Naive thymus-derived CD4-positive, alpha-beta T cell (primary cell): ENCODE measurements at regions of chr10 and their contacts with region 1.

Region 1: GRCh38 chr10:84352251-84352842 is 24.0 kb downstream of the CCSER2 start:
- DNase-seq: peak; percentile 33 to 68 (median 55)
- ATAC-seq: peak; percentile 94
- H3K4me3 ChIP-seq: no peak overlapping the region
- H3K4me3 Mint-ChIP-seq: peak overlapping the region in 3 of 10 donors; percentile 18 to 56 (median 35)
- H3K27ac ChIP-seq: no peak overlapping the region
- H3K27ac Mint-ChIP-seq: no peak overlapping the region
- H3K4me1 ChIP-seq: peaks cover 30 to 46% of the 10 kb centered on the region in 2 donors
- H3K4me1 Mint-ChIP-seq: peaks cover 47 to 87% (median 80%) of the 10 kb centered on the region in 7 donors
- H3K27me3 ChIP-seq: no peaks in the 10 kb centered on the region
- H3K27me3 Mint-ChIP-seq: no peaks in the 10 kb centered on the region

Region 2: GRCh38 chr10:83492004-83492403 is 860.3 kb before region 1 on chr10:
- CTCF ChIA-PET with region 1: no interaction called
- POLR2A ChIA-PET with region 1: no interaction called
- intact Hi-C with region 1: no loop called
- DNase-seq: no peak
- ATAC-seq: no peak
- H3K4me3 ChIP-seq: no peak overlapping the region
- H3K4me3 Mint-ChIP-seq: no peak overlapping the region
- H3K27ac ChIP-seq: no peak overlapping the region
- H3K27ac Mint-ChIP-seq: no peak overlapping the region
- H3K4me1 ChIP-seq: no peaks in the 10 kb centered on the region
- H3K4me1 Mint-ChIP-seq: no peaks in the 10 kb centered on the region
- H3K27me3 ChIP-seq: no peaks in the 10 kb centered on the region
- H3K27me3 Mint-ChIP-seq: no peaks in the 10 kb centered on the region

Region 3: DNA sequence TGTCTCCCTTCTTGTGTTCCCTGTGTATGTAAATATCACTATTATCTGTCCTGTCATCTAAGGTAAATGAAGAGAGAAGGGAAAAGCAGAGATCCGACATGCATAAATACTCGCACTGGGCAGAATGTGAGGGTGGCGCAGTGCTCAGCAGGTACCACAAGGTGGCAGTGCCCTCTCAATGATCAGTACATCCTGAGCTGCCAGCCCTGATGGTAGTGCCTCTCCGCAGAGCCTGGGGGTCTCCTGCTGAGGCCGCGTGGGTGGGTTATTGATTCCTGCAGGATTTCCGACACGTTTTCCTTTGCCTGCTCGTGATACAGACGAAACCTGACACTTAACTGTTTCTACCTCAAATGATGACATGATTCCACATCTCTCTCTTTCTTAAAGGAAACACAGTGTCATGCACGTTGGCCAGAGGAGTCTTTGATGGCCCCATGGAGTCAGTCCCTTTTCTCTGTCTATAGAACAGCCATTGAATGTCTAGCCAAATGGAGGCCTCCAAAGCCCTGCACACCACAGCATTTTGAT is 87.7 kb before region 1 on chr10:
- CTCF ChIA-PET with region 1: interaction called, 5 read pairs
- POLR2A ChIA-PET with region 1: no interaction called
- intact Hi-C with region 1: loop called (anchors 1 to 2 kb)
- DNase-seq: peak; percentile 37 to 74 (median 61)
- ATAC-seq: peak; percentile 94
- H3K4me3 ChIP-seq: no peak overlapping the region
- H3K4me3 Mint-ChIP-seq: no peak overlapping the region
- H3K27ac ChIP-seq: no peak overlapping the region
- H3K27ac Mint-ChIP-seq: no peak overlapping the region
- H3K4me1 ChIP-seq: peaks cover 0 to 3% of the 10 kb centered on the region in 2 donors
- H3K4me1 Mint-ChIP-seq: peaks cover 0 to 16% (median 7%) of the 10 kb centered on the region in 7 donors
- H3K27me3 ChIP-seq: no peaks in the 10 kb centered on the region
- H3K27me3 Mint-ChIP-seq: peaks cover 12 to 36% (median 25%) of the 10 kb centered on the region in 5 donors

Region 4: DNA sequence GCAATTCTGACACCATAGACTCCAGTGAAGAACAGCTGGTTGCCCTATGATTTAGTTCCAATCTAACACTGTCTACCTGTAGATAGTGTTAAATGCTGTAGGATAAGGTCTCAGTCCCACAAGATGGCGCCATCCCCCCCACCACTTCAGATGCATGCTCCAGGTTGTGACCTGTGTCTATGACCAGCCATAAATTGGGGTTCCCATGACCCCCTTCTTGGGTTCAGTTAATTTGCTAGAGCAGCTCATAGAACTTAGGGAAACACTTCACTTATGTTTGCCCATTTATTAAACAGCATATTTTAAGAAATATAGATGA is 10.8 kb before region 1 on chr10:
- CTCF ChIA-PET with region 1: interaction called, 8 read pairs
- POLR2A ChIA-PET with region 1: no interaction called
- intact Hi-C with region 1: loop called (anchors 1 kb)
- DNase-seq: no peak
- ATAC-seq: peak; percentile 49
- H3K4me3 ChIP-seq: no peak overlapping the region
- H3K4me3 Mint-ChIP-seq: peak overlapping the region in 7 of 10 donors; percentile 5 to 71 (median 32)
- H3K27ac ChIP-seq: no peak overlapping the region
- H3K27ac Mint-ChIP-seq: peak overlapping the region in 6 of 9 donors; percentile 43 to 63 (median 52)
- H3K4me1 ChIP-seq: peaks cover 35 to 59% of the 10 kb centered on the region in 2 donors
- H3K4me1 Mint-ChIP-seq: peaks cover 50 to 64% (median 61%) of the 10 kb centered on the region in 7 donors
- H3K27me3 ChIP-seq: no peaks in the 10 kb centered on the region
- H3K27me3 Mint-ChIP-seq: no peaks in the 10 kb centered on the region

Region 5: DNA sequence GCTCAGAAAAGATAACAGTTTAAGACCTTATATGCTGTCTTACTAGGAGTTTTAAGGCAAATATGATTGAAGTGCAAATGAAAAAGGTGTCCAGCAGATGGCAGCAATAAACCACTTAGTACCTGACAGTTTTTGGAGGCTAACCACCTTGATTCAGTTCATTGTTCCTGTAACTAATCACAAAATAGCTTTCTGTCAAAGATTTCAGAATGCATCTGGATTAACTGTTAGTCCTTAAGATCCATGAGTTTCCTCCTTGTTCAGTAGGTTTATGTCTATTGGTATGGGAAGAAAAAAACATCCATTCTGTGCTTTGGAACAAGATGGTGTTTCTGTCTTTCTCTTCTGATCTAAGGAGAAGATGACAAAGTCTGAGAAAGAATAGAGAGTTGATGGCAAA is 22.7 kb after region 1 on chr10:
- CTCF ChIA-PET with region 1: interaction called, 5 read pairs
- POLR2A ChIA-PET with region 1: no interaction called
- intact Hi-C with region 1: loop called in 1 of 2 experiments (anchors 1 kb)
- DNase-seq: peak in 7 of 9 donors; percentile 34 to 68 (median 57)
- ATAC-seq: peak; percentile 70
- H3K4me3 ChIP-seq: no peak overlapping the region
- H3K4me3 Mint-ChIP-seq: peak overlapping the region in 1 of 10 donors; percentile 4
- H3K27ac ChIP-seq: no peak overlapping the region
- H3K27ac Mint-ChIP-seq: peak overlapping the region in 5 of 9 donors; percentile 18 to 79 (median 41)
- H3K4me1 ChIP-seq: peaks cover 0 to 5% of the 10 kb centered on the region in 2 donors
- H3K4me1 Mint-ChIP-seq: peaks cover 19 to 55% (median 37%) of the 10 kb centered on the region in 7 donors
- H3K27me3 ChIP-seq: no peaks in the 10 kb centered on the region
- H3K27me3 Mint-ChIP-seq: no peaks in the 10 kb centered on the region

Region 6: GRCh38 chr10:84613336-84614021 is 261.1 kb after region 1 on chr10:
- CTCF ChIA-PET with region 1: no interaction called
- POLR2A ChIA-PET with region 1: no interaction called
- intact Hi-C with region 1: no loop called
- DNase-seq: no peak
- ATAC-seq: no peak
- H3K4me3 ChIP-seq: no peak overlapping the region
- H3K4me3 Mint-ChIP-seq: no peak overlapping the region
- H3K27ac ChIP-seq: no peak overlapping the region
- H3K27ac Mint-ChIP-seq: no peak overlapping the region
- H3K4me1 ChIP-seq: no peaks in the 10 kb centered on the region
- H3K4me1 Mint-ChIP-seq: peaks cover 0 to 1% (median 0%) of the 10 kb centered on the region in 7 donors
- H3K27me3 ChIP-seq: no peaks in the 10 kb centered on the region
- H3K27me3 Mint-ChIP-seq: peaks cover 8 to 38% (median 30%) of the 10 kb centered on the region in 5 donors

Region 7: DNA sequence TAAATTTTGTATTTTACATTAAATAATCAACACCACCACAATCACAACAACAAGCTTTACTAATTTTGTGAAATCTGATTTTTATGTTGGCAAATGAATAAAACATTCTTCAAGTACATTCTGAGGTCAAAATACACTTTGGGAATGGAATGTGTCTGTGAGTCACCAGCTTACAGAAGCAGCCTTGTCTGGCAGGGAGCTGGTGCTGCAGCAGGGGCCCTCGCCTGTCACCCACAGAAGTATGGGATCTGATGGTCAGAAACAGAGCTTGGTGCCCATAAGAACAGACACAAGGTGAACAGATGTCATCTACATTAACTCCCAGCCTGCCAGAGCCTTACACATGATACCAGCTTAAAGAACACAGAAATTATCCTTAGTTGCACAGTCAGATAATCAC is 473.0 kb after region 1 on chr10:
- CTCF ChIA-PET with region 1: no interaction called
- POLR2A ChIA-PET with region 1: no interaction called
- intact Hi-C with region 1: no loop called
- DNase-seq: no peak
- ATAC-seq: no peak
- H3K4me3 ChIP-seq: no peak overlapping the region
- H3K4me3 Mint-ChIP-seq: no peak overlapping the region
- H3K27ac ChIP-seq: no peak overlapping the region
- H3K27ac Mint-ChIP-seq: no peak overlapping the region
- H3K4me1 ChIP-seq: no peaks in the 10 kb centered on the region
- H3K4me1 Mint-ChIP-seq: peaks cover 0 to 1% (median 0%) of the 10 kb centered on the region in 7 donors
- H3K27me3 ChIP-seq: peaks cover 0 to 3% of the 10 kb centered on the region in 2 donors
- H3K27me3 Mint-ChIP-seq: peaks cover 3 to 10% (median 4%) of the 10 kb centered on the region in 5 donors